ENCODE measurements at regions of chr16 and their contacts with region 1.

Region 1: GRCh38 chr16:49876716-49877129 is 20.8 kb upstream of the ZNF423 start:
- DNase-seq: peak; percentile 71 to 89 (median 81)
- ATAC-seq: peak; percentile 55 to 97 (median 88)
- H3K4me3 ChIP-seq: peak overlapping the region in 11 of 12 donors; percentile 18 to 56 (median 47)
- H3K27ac ChIP-seq: peak overlapping the region in 2 of 12 donors; percentile 11 to 45
- H3K4me1 ChIP-seq: peaks cover 0 to 12% (median 4%) of the 10 kb centered on the region in 12 donors
- H3K27me3 ChIP-seq: peaks cover 0 to 22% (median 6%) of the 10 kb centered on the region in 9 donors
- CTCF ChIP-seq: peak; percentile 91 to 99 (median 94)
- POLR2A ChIP-seq: no peak

Region 2: DNA sequence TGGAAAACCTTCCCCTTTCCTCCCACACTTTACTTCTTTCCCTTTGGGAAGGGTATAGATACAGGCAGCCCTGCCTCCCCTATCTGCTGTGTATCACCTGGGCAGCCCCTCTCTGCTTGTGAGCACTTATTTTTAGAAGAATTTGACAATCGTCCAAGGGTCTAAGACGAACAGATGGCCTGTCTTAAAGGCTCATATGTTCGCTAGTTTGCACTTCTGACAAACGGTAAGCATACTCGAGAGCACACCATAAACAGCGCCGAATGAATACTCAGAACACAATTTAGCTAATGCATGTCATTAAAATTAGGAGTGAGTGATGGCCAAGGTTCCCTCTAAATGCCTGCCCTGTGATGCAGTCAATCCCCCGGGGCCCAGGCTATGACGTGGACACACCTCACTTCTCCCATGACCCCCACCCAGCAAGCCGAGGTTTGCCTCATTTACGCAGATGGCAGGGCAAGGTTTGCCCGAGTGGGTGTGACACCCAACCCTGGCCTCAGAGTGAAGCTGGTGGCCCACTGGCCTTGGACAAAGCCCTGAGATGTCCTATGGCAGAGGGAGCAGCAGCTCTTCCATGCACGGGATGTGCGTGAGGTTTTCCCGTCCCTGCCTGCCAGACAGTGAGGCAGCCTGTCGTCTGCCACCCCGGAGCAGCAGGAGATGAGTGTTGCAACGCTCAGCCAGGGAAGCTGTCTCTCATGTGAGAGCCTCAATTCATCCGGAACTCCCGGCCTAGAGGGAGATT is 377.9 kb before region 1 on chr16:
- intact Hi-C with region 1: loop called in 4 of 10 experiments (anchors 5 to 10 kb)
- DNase-seq: no peak
- ATAC-seq: no peak
- H3K4me3 ChIP-seq: no peak overlapping the region
- H3K27ac ChIP-seq: no peak overlapping the region
- H3K4me1 ChIP-seq: no peaks in the 10 kb centered on the region
- H3K27me3 ChIP-seq: no peaks in the 10 kb centered on the region
- CTCF ChIP-seq: no peak
- POLR2A ChIP-seq: no peak

Region 3: GRCh38 chr16:49608779-49609178 is 267.9 kb before region 1 on chr16:
- intact Hi-C with region 1: loop called in 3 of 10 experiments (anchors 5 to 10 kb)
- DNase-seq: no peak
- ATAC-seq: peak; percentile 58 to 90 (median 88)
- H3K4me3 ChIP-seq: no peak overlapping the region
- H3K27ac ChIP-seq: no peak overlapping the region
- H3K4me1 ChIP-seq: peaks cover 0 to 2% (median 0%) of the 10 kb centered on the region in 12 donors
- H3K27me3 ChIP-seq: no peaks in the 10 kb centered on the region
- CTCF ChIP-seq: peak; percentile 31 to 68 (median 56)
- POLR2A ChIP-seq: no peak

Region 4: DNA sequence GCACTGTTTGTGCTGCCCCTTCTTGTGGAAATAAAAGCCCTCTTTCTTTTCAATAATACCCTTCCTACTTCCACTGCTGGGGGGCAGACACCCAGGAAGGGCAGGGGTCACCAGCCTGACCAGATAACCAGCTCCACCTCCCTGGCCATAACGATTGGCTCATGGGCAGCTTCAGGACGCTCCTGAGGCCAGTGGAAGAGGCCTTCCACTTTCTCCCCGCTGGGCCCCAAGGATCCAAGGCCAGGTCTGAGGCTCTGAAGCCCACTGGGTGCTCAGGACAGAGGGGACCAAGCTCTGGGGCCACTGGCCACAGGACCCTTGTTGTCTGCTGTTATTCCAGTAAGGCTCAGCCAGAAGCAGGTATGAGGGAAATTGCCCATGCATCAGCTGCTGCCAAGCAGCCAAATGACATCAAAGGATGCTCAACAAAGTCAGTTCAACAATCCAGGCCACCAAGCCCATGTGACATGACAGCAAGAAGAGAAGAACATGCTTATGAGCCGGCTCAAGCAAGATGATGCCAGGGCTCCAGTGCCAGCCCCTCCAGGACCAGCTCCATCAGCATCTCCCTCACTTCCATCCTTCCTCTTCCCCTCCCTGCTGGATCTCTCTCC is 259.6 kb before region 1 on chr16:
- intact Hi-C with region 1: loop called in 1 of 10 experiments (anchors 10 kb)
- DNase-seq: no peak
- ATAC-seq: no peak
- H3K4me3 ChIP-seq: no peak overlapping the region
- H3K27ac ChIP-seq: no peak overlapping the region
- H3K4me1 ChIP-seq: peaks cover 0 to 26% (median 16%) of the 10 kb centered on the region in 12 donors
- H3K27me3 ChIP-seq: no peaks in the 10 kb centered on the region
- CTCF ChIP-seq: no peak
- POLR2A ChIP-seq: no peak

Region 5: GRCh38 chr16:49860593-49860992 is 16.1 kb before region 1 on chr16:
- intact Hi-C with region 1: loop called in 1 of 10 experiments (anchors 1 kb)
- DNase-seq: no peak
- ATAC-seq: no peak
- H3K4me3 ChIP-seq: no peak overlapping the region
- H3K27ac ChIP-seq: no peak overlapping the region
- H3K4me1 ChIP-seq: peaks cover 0 to 26% (median 12%) of the 10 kb centered on the region in 12 donors
- H3K27me3 ChIP-seq: peaks cover 0 to 29% (median 0%) of the 10 kb centered on the region in 9 donors
- CTCF ChIP-seq: no peak
- POLR2A ChIP-seq: no peak

Measured in heart left ventricle (tissue), 16 donors.